ENCODE measurements at regions of chr22 and their contacts with region 1.

Region 1: DNA sequence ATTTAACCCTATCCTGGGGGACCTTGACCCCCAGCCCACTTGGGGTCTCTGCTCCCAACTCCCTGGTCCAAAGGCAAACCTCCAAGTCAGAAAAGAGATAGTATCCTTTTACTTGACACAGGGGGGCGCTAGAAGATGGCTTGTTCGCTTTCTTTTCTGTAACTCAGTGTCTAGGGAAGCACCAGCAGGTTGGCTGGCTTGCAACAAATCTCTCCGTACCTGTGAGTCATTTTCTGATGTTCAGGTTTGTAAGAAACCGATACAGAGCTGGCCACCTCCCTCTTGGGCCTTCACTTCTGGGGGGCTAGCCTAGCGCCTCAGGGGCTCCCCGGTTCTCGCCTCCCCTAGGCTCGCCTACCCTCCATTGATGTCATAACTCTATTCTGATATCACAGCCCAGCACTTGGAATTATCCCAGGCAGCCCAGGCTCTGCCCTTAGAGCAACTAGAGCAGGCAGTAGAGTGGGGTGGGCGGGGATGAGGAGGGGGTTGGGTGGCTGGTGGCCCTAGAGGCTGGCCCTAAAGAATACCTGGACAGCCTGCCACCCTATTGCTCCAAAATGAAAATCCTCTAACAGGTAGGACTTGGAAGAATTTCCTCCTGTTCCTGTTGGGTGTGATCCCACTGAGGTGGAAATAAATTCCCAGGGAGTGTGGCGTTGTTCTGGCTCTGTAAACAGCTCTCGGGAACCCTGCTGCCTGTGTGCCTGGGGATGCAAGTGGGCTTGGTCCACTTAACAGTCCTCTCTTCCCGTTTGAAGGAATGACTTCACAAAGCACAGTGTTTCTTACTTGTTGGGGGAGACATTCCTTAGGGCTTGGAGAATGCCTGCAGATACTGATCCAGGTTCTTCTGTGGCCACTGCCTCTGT is 69.4 kb downstream of the OSBP2 start:
- DNase-seq: peak; percentile 40
- H3K4me3 Mint-ChIP-seq: no peak overlapping the region
- H3K27ac Mint-ChIP-seq: no peak overlapping the region
- H3K4me1 Mint-ChIP-seq: peaks cover 4% of the 10 kb centered on the region
- H3K27me3 Mint-ChIP-seq: peaks cover 3% of the 10 kb centered on the region

Region 2: GRCh38 chr22:30262917-30263741 is 500.9 kb before region 1 on chr22:
- intact Hi-C with region 1: no loop called
- DNase-seq: peak; percentile 67
- H3K4me3 Mint-ChIP-seq: peak overlapping the region; percentile 95
- H3K27ac Mint-ChIP-seq: peak overlapping the region; percentile 94
- H3K4me1 Mint-ChIP-seq: peaks cover 64% of the 10 kb centered on the region
- H3K27me3 Mint-ChIP-seq: no peaks in the 10 kb centered on the region

Region 3: GRCh38 chr22:30733181-30733631 is 30.8 kb before region 1 on chr22:
- intact Hi-C with region 1: no loop called
- DNase-seq: no peak
- H3K4me3 Mint-ChIP-seq: no peak overlapping the region
- H3K27ac Mint-ChIP-seq: no peak overlapping the region
- H3K4me1 Mint-ChIP-seq: peaks cover 10% of the 10 kb centered on the region
- H3K27me3 Mint-ChIP-seq: no peaks in the 10 kb centered on the region

Region 4: GRCh38 chr22:30743257-30744020 is 20.6 kb before region 1 on chr22:
- intact Hi-C with region 1: no loop called
- DNase-seq: no peak
- H3K4me3 Mint-ChIP-seq: peak overlapping the region; percentile 40
- H3K27ac Mint-ChIP-seq: peak overlapping the region; percentile 96
- H3K4me1 Mint-ChIP-seq: peaks cover 79% of the 10 kb centered on the region
- H3K27me3 Mint-ChIP-seq: no peaks in the 10 kb centered on the region

Region 5: DNA sequence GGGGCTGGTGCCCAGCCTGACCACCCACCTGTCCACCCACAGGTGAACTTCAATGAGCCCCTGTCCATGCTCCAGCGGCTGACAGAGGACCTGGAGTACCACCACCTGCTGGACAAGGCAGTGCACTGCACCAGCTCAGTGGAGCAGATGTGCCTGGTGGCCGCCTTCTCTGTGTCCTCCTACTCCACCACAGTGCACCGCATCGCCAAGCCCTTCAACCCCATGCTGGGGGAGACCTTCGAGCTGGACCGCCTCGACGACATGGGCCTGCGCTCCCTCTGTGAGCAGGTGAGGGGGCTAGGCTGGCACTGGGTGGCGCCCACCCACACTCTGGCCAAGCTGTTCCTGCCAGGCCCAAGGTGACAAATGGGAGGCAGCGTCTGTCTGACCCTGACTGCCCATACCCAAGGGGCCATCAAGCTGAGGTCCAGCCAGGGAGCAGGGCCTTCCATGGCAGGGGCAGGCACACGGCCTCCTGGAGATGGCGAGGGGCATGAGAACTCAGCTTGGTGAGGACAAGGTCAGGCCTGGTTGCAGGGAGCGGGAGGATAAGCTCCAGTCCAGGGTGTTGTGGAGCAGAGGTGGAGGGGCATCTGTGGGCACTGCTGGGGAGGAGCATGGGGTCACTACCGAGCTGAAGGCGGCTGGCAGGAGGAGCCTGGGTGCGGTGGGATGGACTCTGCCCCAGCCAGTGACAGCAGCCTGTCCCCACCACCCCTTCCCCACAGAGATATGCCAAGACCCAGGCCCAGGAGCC is 126.8 kb after region 1 on chr22:
- intact Hi-C with region 1: loop called (anchors 1 kb)
- DNase-seq: no peak
- H3K4me3 Mint-ChIP-seq: no peak overlapping the region
- H3K27ac Mint-ChIP-seq: no peak overlapping the region
- H3K4me1 Mint-ChIP-seq: peaks cover 8% of the 10 kb centered on the region
- H3K27me3 Mint-ChIP-seq: peaks cover 2% of the 10 kb centered on the region

Region 6: DNA sequence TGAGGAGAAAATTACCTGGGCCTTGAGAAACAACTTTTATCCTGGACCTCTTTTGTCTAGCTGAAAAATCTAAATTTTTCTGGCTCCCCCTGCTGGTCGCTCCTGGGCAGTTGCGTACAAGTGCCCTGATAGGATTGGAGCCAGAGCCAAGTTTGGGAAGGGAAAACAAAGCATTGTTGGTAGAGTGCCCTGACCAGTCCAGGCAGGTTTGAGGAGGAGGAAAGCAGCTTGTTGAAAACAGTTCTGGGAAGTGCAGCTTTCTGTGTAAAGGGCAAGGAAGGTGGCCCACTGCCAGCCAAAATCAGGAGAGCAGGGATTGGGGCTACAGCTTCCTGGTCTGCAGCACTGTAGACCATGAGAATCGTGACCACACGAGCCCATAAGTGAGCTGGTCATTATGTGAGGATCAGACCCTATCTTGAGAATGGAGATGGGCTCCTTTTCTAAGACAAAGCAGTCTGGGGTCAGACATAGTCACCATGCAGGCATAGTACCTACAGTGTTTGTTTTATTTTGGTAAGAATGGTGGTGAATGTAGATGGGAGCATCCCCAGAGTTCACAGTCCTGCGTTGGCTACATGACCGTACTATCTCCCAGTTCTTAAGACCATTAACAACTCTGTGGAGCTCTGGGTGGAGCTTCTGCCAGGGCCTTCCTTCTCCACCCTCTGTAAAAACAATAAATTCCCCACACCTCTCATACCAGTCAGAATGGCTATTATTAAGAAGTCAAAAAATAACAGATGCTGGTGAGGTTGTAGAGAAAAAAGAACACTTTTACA is 549.5 kb after region 1 on chr22:
- intact Hi-C with region 1: no loop called
- DNase-seq: peak; percentile 41
- H3K4me3 Mint-ChIP-seq: no peak overlapping the region
- H3K27ac Mint-ChIP-seq: no peak overlapping the region
- H3K4me1 Mint-ChIP-seq: peaks cover 9% of the 10 kb centered on the region
- H3K27me3 Mint-ChIP-seq: no peaks in the 10 kb centered on the region